ENCODE measurements at regions of chr12 and their contacts with region 1.

Region 1: GRCh38 chr12:55619354-55620138 is 17.1 kb upstream of the OR10P1 start:
- DNase-seq: peak; percentile 70
- CTCF ChIP-seq: peak; percentile 74

Region 2: DNA sequence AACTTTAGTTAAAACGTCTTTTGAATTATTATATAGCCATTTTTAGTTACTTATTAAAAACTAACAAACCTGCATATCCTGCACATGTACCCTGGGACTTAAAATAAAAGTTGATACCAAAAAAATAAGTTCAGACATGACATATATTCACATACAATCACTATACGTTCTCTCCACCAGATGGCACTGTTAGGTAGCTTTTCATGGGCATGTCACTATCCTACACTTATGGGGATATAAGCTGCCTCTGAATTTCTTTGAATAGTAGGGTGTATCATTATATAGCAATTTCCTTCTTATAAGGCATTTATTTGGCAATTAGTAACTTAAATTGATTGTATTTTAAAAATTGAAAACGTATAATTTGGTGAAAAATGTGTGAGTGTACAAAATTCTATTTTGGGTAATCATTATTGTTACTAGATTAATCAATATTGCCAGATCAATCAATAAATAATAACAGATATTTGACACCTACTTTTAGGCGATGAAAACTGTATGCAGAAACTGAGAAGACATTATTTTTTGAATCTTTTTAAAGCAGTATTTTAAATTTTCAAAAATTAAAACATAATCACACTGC is 430.5 kb before region 1 on chr12:
- CTCF ChIA-PET with region 1: interaction called, 42 read pairs
- POLR2A ChIA-PET with region 1: no interaction called
- DNase-seq: peak; percentile 38
- CTCF ChIP-seq: peak; percentile 59

Region 3: GRCh38 chr12:55637467-55637866 is 17.9 kb after region 1 on chr12:
- CTCF ChIA-PET with region 1: interaction called, 25 read pairs
- POLR2A ChIA-PET with region 1: no interaction called
- DNase-seq: no peak
- CTCF ChIP-seq: no peak

Region 4: DNA sequence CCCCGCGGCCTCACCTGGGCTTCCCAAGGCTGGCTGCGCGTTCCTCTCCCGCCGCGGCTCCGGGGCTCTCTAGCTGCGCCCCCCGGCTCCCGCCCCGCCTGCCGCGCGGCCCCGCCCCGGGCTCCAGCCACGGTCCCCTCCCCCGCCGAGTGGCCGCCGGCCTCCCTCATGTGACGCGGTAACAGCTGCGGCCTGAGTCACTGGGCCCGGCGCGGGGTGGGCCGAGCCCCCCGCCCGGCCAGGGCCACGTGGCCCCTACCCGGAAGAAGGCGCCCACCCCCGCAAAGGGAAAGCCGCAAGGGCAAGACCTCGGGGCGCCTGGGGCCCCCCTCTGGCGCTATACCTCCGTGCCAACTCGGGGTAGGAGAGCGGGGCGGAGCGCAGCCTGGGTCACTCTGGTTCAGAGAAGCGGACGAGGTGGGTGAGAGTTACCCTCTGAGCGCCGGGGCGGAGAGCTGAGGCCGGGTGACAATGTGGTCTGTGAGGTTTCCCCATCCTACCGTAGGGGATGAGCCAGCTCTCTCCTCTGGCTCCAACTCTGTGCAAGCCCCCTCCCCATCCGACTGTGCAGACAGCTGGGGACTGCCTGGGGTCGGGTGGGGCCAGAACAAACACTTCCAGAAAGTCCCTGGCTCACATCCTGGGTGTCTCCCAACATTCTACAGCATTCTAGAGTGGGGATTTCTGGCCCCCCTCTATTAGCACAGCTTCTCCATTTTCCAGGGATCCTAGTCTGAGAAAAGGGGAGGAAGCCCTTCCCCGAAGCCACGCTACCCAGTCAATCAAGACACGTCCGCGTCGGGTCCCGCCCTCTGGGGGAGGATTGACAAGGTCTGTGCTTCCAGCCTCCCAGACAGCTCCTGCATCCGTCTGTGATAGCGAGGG is 109.6 kb after region 1 on chr12 and contains the start of gene CD63:
- CTCF ChIA-PET with region 1: no interaction called
- POLR2A ChIA-PET with region 1: no interaction called
- DNase-seq: peak; percentile 95
- CTCF ChIP-seq: peak; percentile 11

Measured in GM10248 (cell line).